ENCODE measurements at regions of chr19 and their contacts with region 1.

Region 1: GRCh38 chr19:47483800-47484690 is at the start of gene KPTN:
- DNase-seq: peak; percentile 88 to 93
- ATAC-seq: peak; percentile 81 to 92 (median 86)
- H3K4me3 ChIP-seq: peak within 1 kb of the TSS; percentile 65
- H3K4me3 Mint-ChIP-seq: peak within 1 kb of the TSS; percentile 95
- H3K27ac ChIP-seq: peak within 1 kb of the TSS; percentile 75
- H3K27ac Mint-ChIP-seq: peak within 1 kb of the TSS; percentile 93 to 97
- H3K4me1 ChIP-seq: peaks cover 35% of the 10 kb centered on the region
- H3K4me1 Mint-ChIP-seq: peaks cover 23 to 36% of the 10 kb centered on the region in 2 donors
- H3K27me3 ChIP-seq: no peaks in the 10 kb centered on the region
- H3K27me3 Mint-ChIP-seq: peaks cover 0 to 3% of the 10 kb centered on the region in 2 donors
- CTCF ChIP-seq: peak; percentile 82
- total RNA-seq, gene KPTN: 3.0 to 4.2 (median 3.6) TPM

Region 2: DNA sequence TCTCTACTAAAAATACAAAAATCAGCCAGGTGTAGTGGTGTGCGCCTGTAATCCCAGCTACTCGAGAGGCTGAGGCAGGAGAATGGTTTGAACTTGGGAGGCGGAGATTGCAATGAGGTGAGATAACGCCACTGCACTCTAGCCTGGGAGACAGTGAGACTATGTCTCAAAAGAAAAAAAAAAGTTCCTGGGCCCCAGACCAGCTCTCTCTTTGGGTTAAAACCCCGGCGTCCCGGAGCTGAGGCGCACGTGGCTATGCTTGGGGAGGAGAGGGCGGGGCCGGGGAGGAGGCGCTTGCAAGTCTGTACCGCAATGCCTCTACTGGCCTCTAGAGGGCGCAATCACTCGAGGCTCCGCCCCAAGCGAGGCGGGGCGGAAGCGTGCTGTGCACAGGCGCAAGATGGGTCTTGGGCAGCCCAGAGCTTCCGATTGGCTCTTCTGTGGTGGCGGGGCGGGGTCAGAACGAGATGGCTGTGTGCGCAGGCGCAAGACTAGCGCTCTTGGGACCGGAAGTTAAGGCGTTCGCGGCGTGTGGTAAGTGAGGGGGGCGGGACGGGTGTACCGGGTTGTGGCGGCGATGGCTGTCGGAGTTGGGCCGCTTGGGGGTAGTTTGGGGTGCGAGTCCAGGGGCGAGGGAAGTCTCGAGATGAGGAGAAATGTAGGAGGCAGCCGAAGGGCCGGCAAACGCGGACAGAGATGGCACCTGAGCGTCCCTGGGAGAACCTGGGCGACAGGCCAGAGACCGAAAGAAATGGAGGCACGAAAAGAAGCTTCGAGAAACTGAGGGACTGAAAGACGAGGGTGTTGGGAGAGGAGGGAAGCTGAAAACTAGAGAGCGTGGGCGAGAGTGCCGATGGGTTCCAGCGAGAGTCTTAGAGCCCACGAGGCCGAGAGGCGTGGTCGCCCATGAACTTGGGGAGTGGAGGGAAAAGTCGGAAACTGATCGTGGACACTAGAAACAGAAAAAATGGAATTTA is 134.9 kb before region 1 on chr19 and contains the start of gene DHX34:
- intact Hi-C with region 1: loop called (anchors 1 kb)
- DNase-seq: peak; percentile 99 to 100
- ATAC-seq: peak; percentile 97 to 100 (median 98)
- H3K4me3 ChIP-seq: peak within 1 kb of the TSS; percentile 88
- H3K4me3 Mint-ChIP-seq: peak within 1 kb of the TSS; percentile 92
- H3K27ac ChIP-seq: peak within 1 kb of the TSS; percentile 70
- H3K27ac Mint-ChIP-seq: peak within 1 kb of the TSS; percentile 78 to 91
- H3K4me1 ChIP-seq: peaks cover 22% of the 10 kb centered on the region
- H3K4me1 Mint-ChIP-seq: peaks cover 25 to 35% of the 10 kb centered on the region in 2 donors
- H3K27me3 ChIP-seq: no peaks in the 10 kb centered on the region
- H3K27me3 Mint-ChIP-seq: no peaks in the 10 kb centered on the region
- CTCF ChIP-seq: peak; percentile 92
- total RNA-seq, gene DHX34: 19.8 to 25.9 (median 20.0) TPM

Region 3: GRCh38 chr19:47471733-47472457 is 12.2 kb before region 1 on chr19 and contains the start of gene SLC8A2:
- intact Hi-C with region 1: no loop called
- DNase-seq: peak; percentile 46 to 83
- ATAC-seq: peak; percentile 79 to 96 (median 89)
- H3K4me3 ChIP-seq: no peak within 1 kb of the TSS
- H3K4me3 Mint-ChIP-seq: no peak within 1 kb of the TSS
- H3K27ac ChIP-seq: no peak within 1 kb of the TSS
- H3K27ac Mint-ChIP-seq: no peak within 1 kb of the TSS
- H3K4me1 ChIP-seq: peaks cover 8% of the 10 kb centered on the region
- H3K4me1 Mint-ChIP-seq: peaks cover 0 to 10% of the 10 kb centered on the region in 2 donors
- H3K27me3 ChIP-seq: peaks cover 23% of the 10 kb centered on the region
- H3K27me3 Mint-ChIP-seq: peaks cover 35 to 47% of the 10 kb centered on the region in 2 donors
- CTCF ChIP-seq: no peak
- total RNA-seq, gene SLC8A2: 0.20 TPM in 1 of 3 donors, not detected in the others

Region 4: GRCh38 chr19:47600246-47601179 is 116.5 kb after region 1 on chr19:
- intact Hi-C with region 1: loop called (anchors 1 kb)
- DNase-seq: peak; percentile 96 to 100
- ATAC-seq: peak; percentile 95 to 98 (median 95)
- H3K4me3 ChIP-seq: peak overlapping the region; percentile 54
- H3K4me3 Mint-ChIP-seq: peak overlapping the region; percentile 93
- H3K27ac ChIP-seq: peak overlapping the region; percentile 75
- H3K27ac Mint-ChIP-seq: peak overlapping the region; percentile 92 to 94
- H3K4me1 ChIP-seq: peaks cover 41% of the 10 kb centered on the region
- H3K4me1 Mint-ChIP-seq: peaks cover 30 to 34% of the 10 kb centered on the region in 2 donors
- H3K27me3 ChIP-seq: no peaks in the 10 kb centered on the region
- H3K27me3 Mint-ChIP-seq: no peaks in the 10 kb centered on the region
- CTCF ChIP-seq: no peak

Region 5: DNA sequence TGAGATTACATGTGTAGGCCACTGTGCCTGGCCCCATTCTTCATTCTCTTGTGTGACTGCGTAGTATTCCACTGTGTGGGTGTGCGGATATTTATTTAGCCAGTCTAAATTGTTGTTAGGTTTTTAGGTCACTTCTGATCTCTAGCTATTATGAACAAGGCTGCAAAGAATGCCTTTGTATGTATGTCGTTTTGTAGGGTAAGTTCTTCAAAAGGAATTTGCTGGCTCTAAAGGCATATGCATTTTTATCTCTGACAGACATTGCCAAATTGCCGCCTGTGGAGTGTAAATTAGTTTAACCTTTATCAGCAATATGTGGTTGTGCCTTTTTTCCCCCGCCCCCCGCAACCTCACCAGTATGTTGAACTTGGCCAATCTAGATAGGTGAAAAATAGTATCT is 198.9 kb after region 1 on chr19:
- intact Hi-C with region 1: no loop called
- DNase-seq: no peak
- ATAC-seq: no peak
- H3K4me3 ChIP-seq: no peak overlapping the region
- H3K4me3 Mint-ChIP-seq: no peak overlapping the region
- H3K27ac ChIP-seq: no peak overlapping the region
- H3K27ac Mint-ChIP-seq: no peak overlapping the region
- H3K4me1 ChIP-seq: peaks cover 4% of the 10 kb centered on the region
- H3K4me1 Mint-ChIP-seq: peaks cover 0 to 11% of the 10 kb centered on the region in 2 donors
- H3K27me3 ChIP-seq: no peaks in the 10 kb centered on the region
- H3K27me3 Mint-ChIP-seq: no peaks in the 10 kb centered on the region
- CTCF ChIP-seq: no peak

Measured in natural killer cell (primary cell).